ENCODE measurements at regions of chr13 and their contacts with region 1.

Region 1: DNA sequence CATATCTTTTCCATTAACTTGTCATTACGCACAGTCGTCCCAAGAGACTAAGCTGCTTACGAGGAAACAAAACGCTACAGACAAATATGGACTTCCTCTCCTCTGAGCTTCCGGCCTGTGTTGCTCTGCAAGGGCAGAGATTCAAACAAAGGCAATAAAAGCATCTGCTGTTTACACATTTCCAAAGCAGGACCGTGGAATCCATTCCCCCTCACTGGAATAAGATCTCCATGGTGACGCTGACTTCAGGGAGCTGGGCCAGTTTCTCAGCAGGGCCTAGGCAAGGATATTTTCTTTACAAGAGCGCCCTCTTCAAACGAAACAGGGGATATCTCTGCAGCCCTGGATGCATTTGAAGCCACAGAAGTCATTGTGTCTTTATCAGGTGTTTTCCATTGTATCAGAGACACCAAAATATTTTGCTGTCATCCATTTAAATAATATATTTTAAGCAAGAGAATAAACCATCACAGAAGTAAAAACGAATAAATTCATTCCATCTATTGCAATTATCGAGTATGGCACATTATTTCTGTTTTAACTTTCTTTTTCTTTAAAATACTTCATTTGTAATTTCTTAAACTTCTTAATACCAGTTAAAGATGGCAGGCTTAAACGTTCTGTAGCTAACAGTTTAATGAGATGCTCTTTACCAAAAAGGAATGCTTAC is 177.5 kb downstream of the DCLK1 start:
- DNase-seq: peak; percentile 12 to 42
- H3K4me3 ChIP-seq: no peak overlapping the region
- H3K27ac ChIP-seq: no peak overlapping the region
- H3K4me1 ChIP-seq: no peaks in the 10 kb centered on the region
- H3K27me3 ChIP-seq: no peaks in the 10 kb centered on the region
- CTCF ChIP-seq: peak; percentile 77

Region 2: GRCh38 chr13:35210261-35210660 is 743.4 kb before region 1 on chr13:
- CTCF ChIA-PET with region 1: no interaction called
- POLR2A ChIA-PET with region 1: no interaction called
- intact Hi-C with region 1: loop called (anchors 10 kb)
- DNase-seq: no peak
- H3K4me3 ChIP-seq: no peak overlapping the region
- H3K27ac ChIP-seq: no peak overlapping the region
- H3K4me1 ChIP-seq: no peaks in the 10 kb centered on the region
- H3K27me3 ChIP-seq: no peaks in the 10 kb centered on the region
- CTCF ChIP-seq: peak; percentile 24; the same call in 1 of the 2 replicates

Region 3: DNA sequence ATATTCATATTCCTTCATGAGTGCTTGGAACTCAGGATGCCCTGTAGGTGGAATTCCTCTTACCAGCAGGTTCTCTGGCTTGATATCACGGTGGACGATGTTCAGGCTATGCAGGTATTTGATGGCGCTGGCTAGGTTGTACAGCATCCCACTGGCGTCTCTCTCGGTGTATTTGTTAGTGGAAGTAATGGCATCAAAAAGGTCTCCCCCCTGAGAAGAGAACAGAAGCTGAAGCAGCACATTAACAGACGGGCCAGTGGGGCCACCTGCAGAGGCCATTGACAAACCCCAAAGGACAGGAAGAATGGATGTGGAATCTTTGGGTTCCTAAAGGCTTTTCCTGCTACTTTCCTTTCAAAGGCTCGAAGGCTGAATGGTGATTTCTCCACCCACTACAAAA is 131.0 kb before region 1 on chr13:
- CTCF ChIA-PET with region 1: no interaction called
- POLR2A ChIA-PET with region 1: no interaction called
- intact Hi-C with region 1: loop called (anchors 1 kb)
- DNase-seq: no peak
- H3K4me3 ChIP-seq: no peak overlapping the region
- H3K27ac ChIP-seq: no peak overlapping the region
- H3K4me1 ChIP-seq: no peaks in the 10 kb centered on the region
- H3K27me3 ChIP-seq: no peaks in the 10 kb centered on the region
- CTCF ChIP-seq: no peak

Region 4: DNA sequence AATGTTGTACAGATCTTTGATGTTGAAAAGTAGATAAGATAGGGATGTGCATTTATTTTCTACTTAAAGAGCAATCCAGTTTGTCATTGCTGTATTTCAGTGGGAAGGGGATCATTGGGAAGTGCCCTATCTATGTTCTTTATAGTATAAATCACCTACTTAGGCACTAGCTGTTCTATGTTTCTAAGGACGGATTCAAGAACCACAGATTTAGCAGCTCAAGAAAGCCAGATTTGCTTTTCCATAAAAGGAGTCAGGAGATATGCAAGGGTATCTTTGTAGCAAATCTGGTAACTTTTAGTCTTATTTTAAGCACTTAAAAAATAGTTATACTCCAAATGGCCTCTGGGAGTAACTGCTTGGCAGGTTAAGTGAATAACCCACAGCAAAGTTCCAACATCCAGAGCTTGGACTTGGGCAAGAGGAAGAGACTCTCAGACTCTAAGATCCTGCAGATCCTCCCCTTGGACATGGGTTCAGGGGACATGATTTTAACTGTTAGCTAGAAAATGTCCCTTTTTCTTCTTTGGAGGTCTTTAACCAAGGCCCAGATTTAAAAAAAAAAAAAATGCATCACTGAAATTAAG is 153.9 kb after region 1 on chr13:
- CTCF ChIA-PET with region 1: no interaction called
- POLR2A ChIA-PET with region 1: no interaction called
- intact Hi-C with region 1: no loop called
- DNase-seq: no peak
- H3K4me3 ChIP-seq: no peak overlapping the region
- H3K27ac ChIP-seq: no peak overlapping the region
- H3K4me1 ChIP-seq: no peaks in the 10 kb centered on the region
- H3K27me3 ChIP-seq: peaks cover 5% of the 10 kb centered on the region; the same call in 1 of the 2 replicates
- CTCF ChIP-seq: no peak